ENCODE measurements at regions of chr17 and their contacts with region 1.

Region 1: DNA sequence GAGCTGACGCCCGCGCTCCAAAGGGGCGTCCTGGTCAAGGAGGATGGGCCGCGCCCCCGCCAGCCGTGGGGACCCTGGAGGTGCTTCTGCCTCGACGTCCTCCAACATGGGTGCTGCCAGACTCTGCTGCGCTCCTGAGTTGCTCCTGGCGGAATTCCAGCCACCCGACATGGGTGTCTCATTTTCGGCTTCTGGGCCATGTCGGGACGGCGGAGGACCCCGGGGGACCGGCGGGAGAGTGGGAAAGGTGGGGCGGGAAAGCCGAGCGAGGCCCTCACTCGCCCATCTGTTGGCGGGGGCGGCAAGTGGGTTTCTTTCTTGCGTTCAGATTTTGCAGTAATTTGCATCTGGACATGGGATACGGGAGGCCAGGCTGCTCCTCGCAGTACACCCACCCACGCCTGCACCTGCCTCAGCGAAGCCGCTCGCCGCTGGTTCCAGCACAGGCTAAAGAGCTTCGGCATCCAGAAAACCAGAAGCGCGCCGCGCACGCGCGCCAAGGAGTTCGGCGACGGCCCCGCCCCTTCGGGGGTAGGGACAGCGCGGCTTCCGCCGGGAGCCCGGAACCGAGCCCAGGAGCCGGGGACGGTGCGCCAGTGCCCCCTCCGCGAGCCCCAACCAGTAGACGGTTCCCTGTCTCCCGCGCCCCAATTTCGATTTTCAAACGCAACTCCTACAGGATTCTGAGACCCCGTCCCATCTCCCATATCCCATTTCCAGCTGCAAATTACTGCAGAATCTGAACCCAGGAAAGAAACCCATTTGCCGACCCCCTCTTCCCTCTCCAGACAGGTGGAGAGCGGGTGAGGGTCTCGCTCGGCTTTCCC is at the start of gene ARMC7:
- DNase-seq: peak; percentile 95
- ATAC-seq: peak; percentile 82
- H3K4me3 Mint-ChIP-seq: peak within 1 kb of the TSS; percentile 79
- H3K27ac Mint-ChIP-seq: peak within 1 kb of the TSS; percentile 92
- H3K4me1 Mint-ChIP-seq: peaks cover 28% of the 10 kb centered on the region
- H3K27me3 Mint-ChIP-seq: no peaks in the 10 kb centered on the region
- total RNA-seq, gene ARMC7: 6.7 to 7.7 TPM

Region 2: GRCh38 chr17:74631468-74632450 is 477.9 kb before region 1 on chr17:
- CTCF ChIA-PET with region 1: no interaction called
- POLR2A ChIA-PET with region 1: no interaction called
- intact Hi-C with region 1: no loop called
- DNase-seq: no peak
- ATAC-seq: no peak
- H3K4me3 Mint-ChIP-seq: no peak overlapping the region
- H3K27ac Mint-ChIP-seq: no peak overlapping the region
- H3K4me1 Mint-ChIP-seq: peaks cover 6% of the 10 kb centered on the region
- H3K27me3 Mint-ChIP-seq: peaks cover 19% of the 10 kb centered on the region

Region 3: DNA sequence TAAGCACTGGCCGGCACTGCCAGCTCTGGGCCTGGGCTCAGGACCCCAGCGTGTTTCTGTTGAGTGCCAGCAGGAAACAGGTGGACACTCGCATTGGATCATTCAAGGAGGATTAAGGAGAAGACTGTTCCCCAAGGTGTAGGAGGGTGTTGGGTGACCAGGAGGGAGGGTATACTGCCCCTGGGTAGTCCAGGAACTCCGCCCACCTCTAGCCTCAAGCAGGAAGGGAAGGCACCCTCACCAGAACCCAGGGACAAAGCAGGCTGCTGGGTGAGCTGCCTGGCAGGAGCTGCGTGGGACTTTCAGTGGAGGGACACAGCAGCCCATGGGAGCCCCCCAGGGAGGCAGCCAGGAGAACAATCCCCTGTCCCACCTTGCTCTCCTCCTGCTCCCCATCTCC is 380.3 kb before region 1 on chr17:
- CTCF ChIA-PET with region 1: no interaction called
- POLR2A ChIA-PET with region 1: no interaction called
- intact Hi-C with region 1: no loop called
- DNase-seq: no peak
- ATAC-seq: no peak
- H3K4me3 Mint-ChIP-seq: no peak overlapping the region
- H3K27ac Mint-ChIP-seq: no peak overlapping the region
- H3K4me1 Mint-ChIP-seq: peaks cover 10% of the 10 kb centered on the region
- H3K27me3 Mint-ChIP-seq: no peaks in the 10 kb centered on the region

Region 4: GRCh38 chr17:75034236-75034908 is 75.2 kb before region 1 on chr17:
- CTCF ChIA-PET with region 1: interaction called, 5 read pairs
- POLR2A ChIA-PET with region 1: interaction called, 4 read pairs
- intact Hi-C with region 1: loop called in 1 of 2 experiments (anchors 2 kb)
- DNase-seq: peak; percentile 96
- ATAC-seq: peak; percentile 65
- H3K4me3 Mint-ChIP-seq: peak overlapping the region; percentile 91
- H3K27ac Mint-ChIP-seq: peak overlapping the region; percentile 96
- H3K4me1 Mint-ChIP-seq: peaks cover 49% of the 10 kb centered on the region
- H3K27me3 Mint-ChIP-seq: no peaks in the 10 kb centered on the region

Region 5: DNA sequence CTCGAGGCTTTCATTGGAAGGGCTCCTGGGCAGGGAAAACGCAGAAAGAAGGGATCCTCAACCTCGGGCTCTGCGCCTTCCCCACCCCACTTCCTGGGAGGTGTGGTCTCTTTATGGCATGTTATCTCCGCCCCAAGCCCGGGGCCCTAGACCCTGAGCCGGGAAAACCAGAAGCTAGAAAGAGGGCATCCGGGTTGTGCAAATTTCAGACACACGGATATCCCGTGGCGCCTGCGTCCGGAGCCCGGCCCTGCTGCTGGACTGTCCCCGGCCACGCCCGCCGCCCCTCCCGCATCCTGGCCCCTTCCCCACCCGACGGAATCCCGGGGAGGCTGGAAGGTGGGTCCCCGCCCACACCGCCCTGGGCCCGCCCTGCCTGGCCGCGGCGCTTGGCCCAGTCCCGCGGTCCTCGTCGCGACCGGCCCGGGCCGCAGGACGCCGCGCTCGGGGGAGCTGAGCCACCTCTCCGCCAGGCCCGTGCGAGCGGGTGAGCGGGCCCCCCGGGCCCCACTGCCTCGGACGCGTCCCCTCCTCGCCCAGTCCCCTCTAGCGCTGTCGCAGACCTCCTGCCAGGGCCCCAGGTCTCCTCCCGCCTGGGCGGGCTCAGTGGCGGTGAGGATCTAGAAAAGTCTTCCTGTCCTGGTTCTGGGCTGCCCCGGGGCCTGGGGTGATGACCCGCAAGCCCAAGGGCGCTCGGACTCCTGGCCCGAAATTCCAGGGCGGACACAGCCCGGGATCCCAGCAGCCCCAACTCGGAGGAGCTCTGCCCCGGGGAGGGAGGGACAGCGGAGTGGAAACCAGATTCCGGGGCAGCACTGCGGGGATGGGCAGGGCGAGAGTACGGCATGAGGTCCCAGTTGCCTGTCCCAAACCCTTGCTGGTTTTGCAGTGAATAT is 21.8 kb before region 1 on chr17 and contains the start of gene SLC16A5:
- CTCF ChIA-PET with region 1: interaction called, 7 read pairs
- POLR2A ChIA-PET with region 1: no interaction called
- intact Hi-C with region 1: loop called in 1 of 2 experiments (anchors 1 kb)
- DNase-seq: peak; percentile 57
- ATAC-seq: peak; percentile 55
- H3K4me3 Mint-ChIP-seq: peak within 1 kb of the TSS; percentile 71
- H3K27ac Mint-ChIP-seq: peak within 1 kb of the TSS; percentile 73
- H3K4me1 Mint-ChIP-seq: peaks cover 51% of the 10 kb centered on the region
- H3K27me3 Mint-ChIP-seq: no peaks in the 10 kb centered on the region
- total RNA-seq, gene SLC16A5: 6.0 to 6.5 TPM

Region 6: DNA sequence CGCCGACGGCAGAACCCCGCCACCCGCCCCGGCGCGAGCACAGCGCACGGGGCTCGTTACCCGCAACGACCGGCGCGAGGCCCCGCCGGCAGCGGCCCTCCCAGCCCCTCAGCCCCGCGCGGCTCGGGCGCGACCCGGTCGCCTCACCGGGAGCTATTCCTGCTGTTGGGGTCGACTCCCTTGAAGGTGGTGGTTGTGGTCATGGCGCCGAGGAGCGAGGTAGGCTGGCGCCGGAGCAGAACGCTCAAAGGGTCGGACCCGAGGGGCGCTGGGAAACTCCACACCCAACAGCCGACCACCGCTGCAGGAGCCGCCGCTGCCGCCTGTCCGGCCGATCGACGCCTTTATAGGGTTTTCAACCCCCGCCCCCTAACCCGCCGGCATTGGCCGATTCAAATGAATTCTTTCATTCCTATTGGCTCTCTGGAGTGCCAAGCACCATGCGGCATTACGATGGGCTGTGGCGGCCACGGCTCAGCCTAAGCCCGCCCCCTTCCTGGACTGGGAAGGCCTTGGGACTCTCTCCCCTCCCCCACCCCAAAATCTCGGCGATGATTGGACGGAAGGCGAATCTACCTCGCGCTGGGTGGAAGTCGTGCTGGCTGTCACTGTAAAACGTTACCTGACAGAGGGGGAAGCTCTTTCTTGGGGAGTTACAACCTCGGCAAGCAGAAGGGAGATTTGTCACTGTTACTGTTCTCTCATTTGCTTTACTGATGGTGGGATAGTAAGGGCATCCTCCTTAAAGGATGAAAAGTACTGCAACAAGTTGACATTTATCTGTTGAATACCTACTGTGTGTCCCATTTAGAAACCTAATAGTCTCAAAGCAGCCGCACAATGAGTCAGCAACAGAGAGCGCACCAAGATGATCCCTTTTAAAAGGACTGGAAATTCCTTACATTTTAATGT is 44.8 kb after region 1 on chr17 and contains the start of gene JPT1:
- CTCF ChIA-PET with region 1: interaction called, 10 read pairs
- POLR2A ChIA-PET with region 1: interaction called, 3 read pairs
- intact Hi-C with region 1: loop called (anchors 1 to 5 kb)
- DNase-seq: peak; percentile 99
- ATAC-seq: peak; percentile 98
- H3K4me3 Mint-ChIP-seq: peak within 1 kb of the TSS; percentile 96
- H3K27ac Mint-ChIP-seq: peak within 1 kb of the TSS; percentile 89
- H3K4me1 Mint-ChIP-seq: peaks cover 36% of the 10 kb centered on the region
- H3K27me3 Mint-ChIP-seq: no peaks in the 10 kb centered on the region
- total RNA-seq, gene JPT1: 234 to 238 TPM

Region 7: DNA sequence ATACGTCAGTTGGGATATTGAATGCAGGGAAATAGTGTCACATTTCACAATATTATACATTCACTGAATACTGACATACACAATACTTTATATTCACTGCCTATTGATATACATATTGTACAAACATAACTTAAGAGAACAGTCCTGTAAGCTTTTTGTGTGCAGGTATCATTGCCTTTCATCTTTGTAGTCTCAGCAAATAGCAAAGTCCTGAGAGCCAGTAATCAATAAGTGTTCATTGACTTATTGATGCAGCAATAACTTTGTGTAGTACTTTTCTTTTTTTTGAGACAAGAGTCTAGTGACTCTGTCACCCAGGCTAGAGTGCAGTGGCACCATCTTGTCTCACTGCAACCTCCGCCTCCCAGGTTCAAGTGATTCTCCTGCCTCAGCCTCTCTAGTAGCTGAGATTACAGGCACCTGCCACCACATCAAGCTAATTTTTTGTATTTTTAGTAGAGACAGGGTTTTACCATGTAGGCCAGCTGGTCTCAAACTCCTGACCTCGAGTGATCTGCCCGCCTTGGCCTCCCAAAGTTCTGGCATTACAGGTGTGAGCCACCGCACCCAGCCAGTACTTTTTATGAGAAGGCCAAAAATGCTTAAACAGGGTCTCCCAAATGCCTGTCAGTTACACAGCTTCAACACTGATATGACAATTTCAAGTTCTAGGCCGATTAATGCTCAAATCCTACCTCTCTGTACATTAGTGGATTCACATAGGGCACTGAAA is 90.4 kb after region 1 on chr17:
- CTCF ChIA-PET with region 1: interaction called, 108 read pairs
- POLR2A ChIA-PET with region 1: interaction called, 4 read pairs
- intact Hi-C with region 1: loop called (anchors 1 kb)
- DNase-seq: no peak
- ATAC-seq: no peak
- H3K4me3 Mint-ChIP-seq: no peak overlapping the region
- H3K27ac Mint-ChIP-seq: no peak overlapping the region
- H3K4me1 Mint-ChIP-seq: peaks cover 8% of the 10 kb centered on the region
- H3K27me3 Mint-ChIP-seq: no peaks in the 10 kb centered on the region

Region 8: GRCh38 chr17:75412455-75413317 is 303.1 kb after region 1 on chr17:
- CTCF ChIA-PET with region 1: interaction called, 13 read pairs
- POLR2A ChIA-PET with region 1: no interaction called
- intact Hi-C with region 1: loop called (anchors 1 to 5 kb)
- DNase-seq: peak; percentile 84
- ATAC-seq: peak; percentile 85
- H3K4me3 Mint-ChIP-seq: peak overlapping the region; percentile 44
- H3K27ac Mint-ChIP-seq: peak overlapping the region; percentile 3
- H3K4me1 Mint-ChIP-seq: peaks cover 15% of the 10 kb centered on the region
- H3K27me3 Mint-ChIP-seq: no peaks in the 10 kb centered on the region

Measured in activated CD4-positive, alpha-beta T cell treated with anti-CD3 and anti-CD28 coated beads for 36 hours (primary cell).